ENCODE measurements at regions of chr13 and their contacts with region 1.

Region 1: GRCh38 chr13:93413972-93414717 is 187.5 kb downstream of the GPC6 start:
- DNase-seq: no peak
- H3K4me3 ChIP-seq: no peak overlapping the region
- CTCF ChIP-seq: no peak
- POLR2A ChIP-seq: no peak

Region 2: DNA sequence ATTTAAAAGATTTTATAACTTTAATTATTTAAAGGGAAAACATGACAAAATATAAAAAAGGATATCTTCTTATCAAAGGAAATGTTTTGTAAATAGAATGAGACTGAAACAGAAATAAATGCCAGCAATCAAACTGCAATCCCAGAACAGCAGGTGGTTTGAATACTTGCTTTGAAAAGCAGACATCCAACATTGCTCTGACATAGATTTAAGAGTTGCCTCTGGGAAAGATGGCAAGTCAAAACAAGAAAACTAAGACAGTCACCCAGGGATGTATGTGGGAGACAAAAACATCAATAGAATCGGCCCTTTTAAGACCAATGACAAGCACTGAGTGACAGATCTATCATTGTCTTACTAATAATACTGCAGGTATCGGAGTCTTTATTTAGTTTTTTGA is 977.2 kb before region 1 on chr13:
- intact Hi-C with region 1: no loop called
- DNase-seq: no peak
- H3K4me3 ChIP-seq: no peak overlapping the region
- CTCF ChIP-seq: no peak
- POLR2A ChIP-seq: no peak

Region 3: GRCh38 chr13:94272038-94272437 is 857.9 kb after region 1 on chr13:
- intact Hi-C with region 1: loop called (anchors 10 kb)
- DNase-seq: no peak
- H3K4me3 ChIP-seq: no peak overlapping the region
- CTCF ChIP-seq: no peak
- POLR2A ChIP-seq: no peak

Measured in lower leg skin (tissue), 4 donors.